Calu3 (cell line): ENCODE measurements at regions of chr7 and their contacts with region 1.

Region 1: DNA sequence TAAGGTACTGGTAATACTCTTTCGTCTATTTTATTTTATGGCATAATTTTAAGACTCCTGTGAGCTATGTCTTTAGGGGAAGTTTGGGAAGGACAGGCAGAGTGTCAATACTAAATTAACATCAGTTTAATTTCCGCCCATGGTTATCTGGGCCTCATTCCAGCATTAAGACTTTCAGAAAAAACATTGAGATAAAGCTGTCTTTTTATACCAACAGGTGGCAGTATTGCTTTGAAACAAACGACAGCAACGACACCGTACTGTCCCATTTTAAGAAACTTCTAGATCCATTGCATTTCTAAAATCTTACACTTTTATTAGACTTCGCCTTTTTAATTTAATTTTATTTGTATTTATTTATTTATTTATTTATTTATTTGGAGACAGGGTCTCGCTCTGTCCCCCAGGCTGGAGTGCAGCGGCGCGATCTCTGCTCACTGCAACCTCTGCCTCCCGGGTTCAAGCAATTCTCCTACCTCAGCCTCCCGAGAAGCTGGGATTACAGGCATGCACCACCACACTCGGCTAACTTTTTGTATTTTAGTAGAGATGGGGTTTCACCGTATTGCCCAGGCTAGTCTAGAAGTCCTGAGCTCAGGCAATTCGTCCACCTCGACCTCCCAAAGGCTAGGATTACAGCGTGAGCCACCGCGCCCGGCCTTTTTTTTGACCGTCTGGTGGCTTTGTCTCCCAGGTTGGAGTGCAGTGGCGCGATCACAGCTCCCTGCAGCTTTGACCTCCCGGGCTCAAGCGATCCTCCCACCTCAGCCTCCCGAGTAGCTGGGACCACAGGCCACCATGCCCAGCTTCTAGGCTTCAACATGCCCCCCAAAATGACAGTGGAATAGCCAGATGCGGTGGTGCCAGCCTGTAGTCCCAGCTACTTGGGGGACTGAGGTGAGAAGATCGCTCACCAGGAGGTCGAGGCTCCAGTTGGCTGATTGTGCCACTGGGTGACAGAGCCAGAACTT is 78.7 kb upstream of the C1GALT1 start:
- DNase-seq: peak; percentile 20
- H3K4me3 Mint-ChIP-seq: peak overlapping the region; percentile 46
- H3K27ac Mint-ChIP-seq: peak overlapping the region; percentile 38
- H3K4me1 Mint-ChIP-seq: peaks cover 27% of the 10 kb centered on the region
- H3K27me3 Mint-ChIP-seq: no peaks in the 10 kb centered on the region
- CTCF ChIP-seq: peak; percentile 63

Region 2: GRCh38 chr7:7176421-7177043 is 72.9 kb after region 1 on chr7:
- CTCF ChIA-PET with region 1: interaction called, 15 read pairs
- intact Hi-C with region 1: loop called (anchors 1 kb)
- DNase-seq: peak; percentile 33
- H3K4me3 Mint-ChIP-seq: peak overlapping the region; percentile 53
- H3K27ac Mint-ChIP-seq: peak overlapping the region; percentile 93
- H3K4me1 Mint-ChIP-seq: peaks cover 45% of the 10 kb centered on the region
- H3K27me3 Mint-ChIP-seq: no peaks in the 10 kb centered on the region
- CTCF ChIP-seq: no peak

Region 3: DNA sequence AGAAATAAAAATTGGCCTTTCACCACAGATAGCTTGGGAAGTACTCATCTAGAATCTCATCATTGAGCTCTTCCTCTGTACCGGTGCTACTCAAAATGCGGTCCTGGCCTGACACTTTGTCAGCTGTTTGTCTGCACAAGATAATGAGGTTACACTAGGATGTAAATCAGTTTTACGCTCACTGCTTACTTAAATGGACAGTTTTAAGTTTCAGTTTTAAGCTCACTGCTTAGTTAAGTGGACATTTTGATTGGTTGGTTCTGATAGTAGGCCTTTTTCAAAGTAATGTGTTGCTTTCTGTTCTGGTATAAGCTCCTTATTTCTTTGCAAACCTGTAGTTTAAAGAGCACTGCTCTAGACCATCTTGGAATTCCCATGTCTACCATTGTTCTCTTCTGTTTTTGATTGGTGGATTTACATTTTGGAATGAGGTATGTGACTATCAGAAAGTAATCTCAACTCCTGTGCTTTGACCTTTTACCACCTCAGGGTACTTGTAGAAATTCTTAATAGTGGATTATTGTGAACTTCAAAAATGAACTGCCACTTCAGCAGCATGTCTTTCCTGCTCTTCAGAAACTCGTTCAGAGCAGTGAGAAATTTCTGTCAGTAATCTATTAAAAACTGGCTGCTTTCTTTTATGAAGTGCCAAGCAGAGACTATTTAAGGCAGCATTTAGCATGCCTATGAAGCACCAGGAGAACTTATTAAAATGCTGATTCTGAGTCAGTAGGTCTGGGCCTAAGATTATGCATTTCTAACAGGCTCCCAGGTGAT is 133.8 kb after region 1 on chr7:
- CTCF ChIA-PET with region 1: no interaction called
- intact Hi-C with region 1: loop called (anchors 5 kb)
- DNase-seq: no peak
- H3K4me3 Mint-ChIP-seq: no peak overlapping the region
- H3K27ac Mint-ChIP-seq: no peak overlapping the region
- H3K4me1 Mint-ChIP-seq: peaks cover 15% of the 10 kb centered on the region
- H3K27me3 Mint-ChIP-seq: no peaks in the 10 kb centered on the region
- CTCF ChIP-seq: no peak

Region 4: DNA sequence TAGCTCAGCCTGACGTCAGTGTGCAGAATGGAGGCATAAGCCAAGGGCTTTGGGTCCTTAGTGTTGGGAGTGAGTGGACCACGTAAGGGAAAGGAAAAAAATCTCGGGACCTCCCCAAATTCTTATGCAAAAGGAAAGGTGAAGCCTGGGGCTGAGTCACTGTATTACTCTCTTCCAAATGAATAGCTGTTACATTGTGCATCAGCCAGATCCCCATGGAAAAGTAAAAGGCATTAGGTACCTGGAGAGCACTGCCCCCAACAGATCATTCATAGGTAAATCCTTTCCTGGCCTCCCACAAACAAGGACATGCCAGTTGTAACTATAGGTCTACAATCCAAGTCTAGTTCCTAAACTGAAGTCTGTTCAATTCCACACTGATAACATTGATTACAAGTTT is 249.2 kb after region 1 on chr7:
- CTCF ChIA-PET with region 1: no interaction called
- intact Hi-C with region 1: loop called (anchors 5 kb)
- DNase-seq: no peak
- H3K4me3 Mint-ChIP-seq: no peak overlapping the region
- H3K27ac Mint-ChIP-seq: no peak overlapping the region
- H3K4me1 Mint-ChIP-seq: peaks cover 10% of the 10 kb centered on the region
- H3K27me3 Mint-ChIP-seq: no peaks in the 10 kb centered on the region
- CTCF ChIP-seq: no peak

Region 5: GRCh38 chr7:7542251-7542835 is 438.7 kb after region 1 on chr7:
- CTCF ChIA-PET with region 1: no interaction called
- intact Hi-C with region 1: loop called (anchors 2 kb)
- DNase-seq: no peak
- H3K4me3 Mint-ChIP-seq: no peak overlapping the region
- H3K27ac Mint-ChIP-seq: no peak overlapping the region
- H3K4me1 Mint-ChIP-seq: peaks cover 18% of the 10 kb centered on the region
- H3K27me3 Mint-ChIP-seq: no peaks in the 10 kb centered on the region
- CTCF ChIP-seq: no peak